Activated T-helper 1 cell treated with anti-CD3 and anti-CD28 coated beads, Interleukin-12 subunit alpha, Interleukin-12 subunit beta, Interleukin-2, Interleukin-4 antibody, amounts not matched to agents 30 ng/mL and 10 ng/mL and 1 ng/mL, durations not matched to agents 14 hours and 24 hours and 36 hours (primary cell): ENCODE measurements at regions of chr7 and their contacts with region 1.

Region 1: GRCh38 chr7:118104812-118105441 is 79.0 kb upstream of the LSM8 start:
- DNase-seq: no peak
- H3K4me3 Mint-ChIP-seq: no peak overlapping the region
- H3K27ac Mint-ChIP-seq: no peak overlapping the region
- H3K4me1 Mint-ChIP-seq: no peaks in the 10 kb centered on the region
- H3K27me3 Mint-ChIP-seq: no peaks in the 10 kb centered on the region

Region 2: GRCh38 chr7:117458977-117459583 is 645.8 kb before region 1 on chr7:
- intact Hi-C with region 1: loop called (anchors 2 kb)
- DNase-seq: no peak
- H3K4me3 Mint-ChIP-seq: no peak overlapping the region
- H3K27ac Mint-ChIP-seq: no peak overlapping the region
- H3K4me1 Mint-ChIP-seq: no peaks in the 10 kb centered on the region
- H3K27me3 Mint-ChIP-seq: no peaks in the 10 kb centered on the region

Region 3: GRCh38 chr7:117750612-117751563 is 354.0 kb before region 1 on chr7:
- intact Hi-C with region 1: loop called (anchors 1 kb)
- DNase-seq: no peak
- H3K4me3 Mint-ChIP-seq: no peak overlapping the region
- H3K27ac Mint-ChIP-seq: no peak overlapping the region
- H3K4me1 Mint-ChIP-seq: no peaks in the 10 kb centered on the region
- H3K27me3 Mint-ChIP-seq: no peaks in the 10 kb centered on the region

Region 4: GRCh38 chr7:117929237-117929636 is 175.7 kb before region 1 on chr7:
- intact Hi-C with region 1: no loop called
- DNase-seq: no peak
- H3K4me3 Mint-ChIP-seq: no peak overlapping the region
- H3K27ac Mint-ChIP-seq: no peak overlapping the region
- H3K4me1 Mint-ChIP-seq: no peaks in the 10 kb centered on the region
- H3K27me3 Mint-ChIP-seq: no peaks in the 10 kb centered on the region

Region 5: DNA sequence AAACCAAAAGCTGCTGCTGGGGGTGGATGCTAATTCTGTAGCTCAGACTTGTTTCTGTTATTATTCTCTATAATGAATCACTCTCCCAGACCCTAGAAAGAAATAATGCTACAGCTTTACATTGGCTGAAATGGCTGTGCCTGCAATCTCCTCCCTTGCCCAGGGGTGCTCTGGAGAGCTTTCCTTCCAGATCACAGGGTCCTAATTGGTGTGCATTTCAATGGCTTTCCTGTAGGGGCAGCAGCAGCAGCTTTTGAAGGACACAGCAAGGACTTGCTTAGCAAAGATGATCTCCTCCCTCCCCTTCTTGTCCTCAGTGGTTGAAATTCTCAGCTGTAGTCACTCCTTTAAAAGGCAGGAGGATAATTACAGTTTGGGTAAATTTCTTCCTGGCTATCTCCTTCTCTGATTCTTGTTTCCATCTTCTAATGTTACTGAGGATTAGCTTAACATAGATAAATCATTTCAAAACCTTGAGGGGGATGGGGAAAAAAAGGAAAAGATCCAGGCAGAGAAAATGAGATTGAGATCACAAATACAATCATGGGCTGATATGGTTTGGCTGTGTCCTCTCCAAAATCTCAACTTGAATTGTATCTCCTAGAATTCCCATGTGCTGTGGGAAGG is 111.4 kb before region 1 on chr7:
- intact Hi-C with region 1: loop called (anchors 2 kb)
- DNase-seq: no peak
- H3K4me3 Mint-ChIP-seq: no peak overlapping the region
- H3K27ac Mint-ChIP-seq: no peak overlapping the region
- H3K4me1 Mint-ChIP-seq: no peaks in the 10 kb centered on the region
- H3K27me3 Mint-ChIP-seq: no peaks in the 10 kb centered on the region